ENCODE measurements at regions of chr2 and their contacts with region 1.

Region 1: GRCh38 chr2:201432038-201432620 is 19.1 kb downstream of the TRAK2 start:
- DNase-seq: no peak
- ATAC-seq: no peak

Region 2: DNA sequence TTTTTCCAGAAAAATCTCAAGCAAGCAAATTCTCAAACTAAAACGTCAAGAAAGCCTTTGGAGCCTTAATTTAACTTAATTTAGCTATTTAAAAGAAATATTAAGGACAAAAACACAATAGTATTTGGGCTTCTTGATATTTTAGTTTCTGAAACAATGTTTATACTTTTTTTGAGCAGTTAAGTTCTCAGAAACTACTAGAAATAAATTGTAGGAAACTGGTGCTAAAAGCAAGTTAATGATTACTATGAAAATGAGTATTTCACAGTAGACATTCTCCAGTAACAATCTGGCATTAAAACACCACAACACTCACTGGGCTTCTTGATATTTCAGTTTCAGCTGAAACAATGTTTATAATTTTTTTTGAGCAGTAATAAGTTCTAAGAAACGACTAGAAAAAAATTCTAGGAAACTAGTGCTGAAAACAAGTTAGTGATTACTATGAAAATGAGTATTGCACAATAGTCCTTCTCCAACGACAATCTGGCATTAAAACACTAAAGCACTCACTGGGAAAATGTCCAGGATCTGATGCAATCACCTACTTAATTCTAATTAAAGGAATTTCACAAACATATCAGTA is 26.0 kb before region 1 on chr2:
- intact Hi-C with region 1: loop called (anchors 2 kb)
- DNase-seq: no peak
- ATAC-seq: peak; percentile 55

Region 3: GRCh38 chr2:201419057-201419635 is 13.0 kb before region 1 on chr2:
- intact Hi-C with region 1: loop called (anchors 2 kb)
- DNase-seq: no peak
- ATAC-seq: peak; percentile 30